WTC11 (cell line): ENCODE measurements at regions of chr13 and their contacts with region 1.

Region 1: GRCh38 chr13:23741879-23742510 is 147.2 kb downstream of the MIPEP start:
- DNase-seq: peak; percentile 64
- ATAC-seq: peak; percentile 92
- H3K4me3 Mint-ChIP-seq: no peak overlapping the region
- H3K27ac Mint-ChIP-seq: no peak overlapping the region
- H3K4me1 Mint-ChIP-seq: peaks cover 3% of the 10 kb centered on the region; the same call in 1 of the 2 replicates
- H3K27me3 Mint-ChIP-seq: no peaks in the 10 kb centered on the region
- CTCF ChIP-seq: peak; percentile 49; the same call in 1 of the 2 replicates

Region 2: DNA sequence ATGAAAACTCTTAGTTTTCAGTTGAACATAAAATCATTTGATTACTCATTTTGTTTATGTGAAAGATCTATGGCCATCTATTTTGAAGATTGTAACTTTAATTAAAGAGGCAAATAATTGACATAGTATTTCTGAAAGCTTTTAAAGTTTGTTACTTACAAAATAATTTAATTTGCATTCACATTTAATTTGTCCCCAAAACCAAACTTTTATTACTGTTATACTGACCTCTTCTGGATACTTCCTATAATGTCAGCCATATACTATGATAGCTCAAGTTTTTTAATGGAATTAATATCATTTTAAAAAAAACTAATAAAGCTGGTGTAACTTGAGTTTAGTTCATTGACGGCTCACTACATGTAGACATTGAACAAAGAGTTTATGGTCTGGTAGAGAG is 566.1 kb before region 1 on chr13:
- CTCF ChIA-PET with region 1: no interaction called
- POLR2A ChIA-PET with region 1: no interaction called
- DNase-seq: no peak
- ATAC-seq: no peak
- H3K4me3 Mint-ChIP-seq: no peak overlapping the region
- H3K27ac Mint-ChIP-seq: no peak overlapping the region
- H3K4me1 Mint-ChIP-seq: 0 out of 2 replicates have a peak, but pooled peaks cover 6% of the 10 kb centered on the region
- H3K27me3 Mint-ChIP-seq: no peaks in the 10 kb centered on the region
- CTCF ChIP-seq: peak; percentile 27; the same call in 1 of the 2 replicates

Region 3: DNA sequence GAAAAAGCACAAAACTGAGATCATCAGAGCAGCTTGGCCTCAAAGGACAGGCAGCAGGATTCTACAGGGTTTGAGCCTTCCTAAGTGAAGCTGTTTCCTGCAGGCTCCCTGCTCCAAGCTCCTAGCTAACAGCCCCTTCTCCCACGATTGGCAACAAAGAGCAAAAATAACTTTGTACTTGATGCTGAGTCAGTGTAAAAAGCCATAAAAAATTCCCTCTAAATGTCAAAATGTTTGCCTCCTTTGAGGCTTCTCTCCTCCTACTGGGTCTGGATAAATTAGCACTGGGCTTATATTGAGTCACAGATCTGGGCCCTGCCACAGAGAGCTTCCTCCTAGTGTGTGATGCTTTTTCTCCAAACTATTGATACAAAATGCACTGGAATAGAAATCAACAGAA is 18.5 kb before region 1 on chr13:
- CTCF ChIA-PET with region 1: interaction called, 22 read pairs
- POLR2A ChIA-PET with region 1: no interaction called
- DNase-seq: no peak
- ATAC-seq: no peak
- H3K4me3 Mint-ChIP-seq: no peak overlapping the region
- H3K27ac Mint-ChIP-seq: no peak overlapping the region
- H3K4me1 Mint-ChIP-seq: peaks cover 19% of the 10 kb centered on the region
- H3K27me3 Mint-ChIP-seq: no peaks in the 10 kb centered on the region
- CTCF ChIP-seq: no peak

Region 4: DNA sequence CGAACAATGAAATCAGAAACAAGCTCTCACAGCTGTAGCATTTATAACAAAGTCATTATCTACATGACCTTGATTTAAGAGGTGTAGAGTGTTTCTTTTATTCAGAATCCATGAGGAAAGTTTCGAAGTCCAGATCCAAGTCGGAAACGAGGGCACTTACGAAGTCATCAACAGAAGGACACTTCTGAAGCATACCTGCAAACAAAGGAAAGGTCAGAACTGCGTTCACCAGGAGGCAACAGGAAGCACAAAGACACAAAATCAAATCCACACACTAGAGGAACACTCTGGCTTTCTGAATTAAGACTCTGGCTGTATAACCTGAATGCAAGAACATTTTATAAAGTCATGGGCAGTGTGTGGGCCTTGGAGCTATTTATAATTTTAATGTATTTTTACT is 11.7 kb before region 1 on chr13:
- CTCF ChIA-PET with region 1: interaction called, 22 read pairs
- POLR2A ChIA-PET with region 1: no interaction called
- DNase-seq: no peak
- ATAC-seq: no peak
- H3K4me3 Mint-ChIP-seq: no peak overlapping the region
- H3K27ac Mint-ChIP-seq: no peak overlapping the region
- H3K4me1 Mint-ChIP-seq: peaks cover 8% of the 10 kb centered on the region
- H3K27me3 Mint-ChIP-seq: no peaks in the 10 kb centered on the region
- CTCF ChIP-seq: no peak

Region 5: DNA sequence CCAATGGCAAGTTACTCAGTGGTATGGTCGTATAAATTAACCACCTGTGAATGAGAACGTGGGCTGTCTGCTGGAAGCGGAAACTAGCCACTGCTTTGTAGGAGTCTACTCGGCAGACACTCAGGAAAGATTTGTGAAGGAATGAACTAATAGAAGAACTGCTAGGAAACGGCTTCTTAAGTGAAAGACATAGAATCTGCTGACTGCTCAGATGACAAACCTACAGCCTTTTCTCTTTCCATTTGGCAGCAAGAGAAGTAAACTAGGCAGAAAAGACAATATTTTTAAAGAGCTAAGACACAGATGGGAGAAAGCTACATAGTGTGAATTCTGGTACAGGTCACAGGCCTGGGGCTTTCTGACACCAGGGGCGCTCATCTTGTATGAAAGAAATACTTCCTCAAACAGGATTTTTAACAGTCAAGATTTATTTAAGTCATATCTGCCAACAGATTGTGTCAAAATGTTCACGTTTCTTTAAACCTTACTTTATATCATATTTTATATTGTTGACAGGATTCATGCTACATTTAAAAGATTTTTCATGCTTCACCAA is 68.8 kb after region 1 on chr13:
- CTCF ChIA-PET with region 1: interaction called, 10 read pairs
- POLR2A ChIA-PET with region 1: no interaction called
- DNase-seq: peak; percentile 13
- ATAC-seq: peak; percentile 53
- H3K4me3 Mint-ChIP-seq: no peak overlapping the region
- H3K27ac Mint-ChIP-seq: no peak overlapping the region
- H3K4me1 Mint-ChIP-seq: peaks cover 33% of the 10 kb centered on the region
- H3K27me3 Mint-ChIP-seq: no peaks in the 10 kb centered on the region
- CTCF ChIP-seq: no peak